MCF 10A (cell line): ENCODE measurements at regions of chr3 and their contacts with region 1.

Region 1: DNA sequence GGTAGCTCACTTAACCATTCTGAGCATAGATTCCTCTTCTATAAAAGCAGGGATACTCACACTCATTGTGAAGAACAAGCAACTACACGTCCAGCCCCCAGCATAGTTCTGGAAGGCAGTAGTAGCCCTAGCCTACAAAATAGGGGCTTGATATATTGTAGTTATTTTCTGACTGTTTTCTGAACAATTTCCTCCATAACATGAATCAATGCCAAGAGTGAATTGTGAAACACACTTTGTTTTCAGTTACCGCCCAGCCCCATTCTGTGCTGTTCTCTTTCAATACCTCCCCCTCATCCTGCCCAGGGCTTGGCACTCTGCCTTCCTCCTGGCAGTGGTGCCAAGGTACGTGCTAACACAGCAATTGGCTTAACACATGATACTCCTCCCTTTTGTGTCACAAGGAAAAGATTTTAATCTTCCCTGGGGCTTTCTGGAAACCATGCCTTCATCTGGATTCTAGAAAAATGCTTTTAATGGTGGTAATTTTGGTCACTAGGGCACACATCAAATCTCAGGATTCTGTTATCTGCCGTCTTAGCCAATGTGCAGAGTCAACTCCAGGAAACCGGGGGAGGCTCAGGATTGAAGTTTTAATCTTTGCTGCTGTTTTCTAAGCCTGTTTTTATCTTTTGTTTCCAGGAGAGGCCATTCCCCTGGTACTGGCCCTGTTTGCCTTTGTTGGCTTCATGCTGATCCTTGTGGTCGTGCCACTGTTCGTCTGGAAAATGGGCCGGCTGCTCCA is 37.2 kb downstream of the IL20RB start:
- DNase-seq: peak; percentile 99
- H3K4me3 Mint-ChIP-seq: peak overlapping the region; percentile 42
- H3K27ac Mint-ChIP-seq: peak overlapping the region; percentile 94
- H3K4me1 Mint-ChIP-seq: peaks cover 61% of the 10 kb centered on the region
- H3K27me3 Mint-ChIP-seq: no peaks in the 10 kb centered on the region
- CTCF ChIP-seq: no peak

Region 2: DNA sequence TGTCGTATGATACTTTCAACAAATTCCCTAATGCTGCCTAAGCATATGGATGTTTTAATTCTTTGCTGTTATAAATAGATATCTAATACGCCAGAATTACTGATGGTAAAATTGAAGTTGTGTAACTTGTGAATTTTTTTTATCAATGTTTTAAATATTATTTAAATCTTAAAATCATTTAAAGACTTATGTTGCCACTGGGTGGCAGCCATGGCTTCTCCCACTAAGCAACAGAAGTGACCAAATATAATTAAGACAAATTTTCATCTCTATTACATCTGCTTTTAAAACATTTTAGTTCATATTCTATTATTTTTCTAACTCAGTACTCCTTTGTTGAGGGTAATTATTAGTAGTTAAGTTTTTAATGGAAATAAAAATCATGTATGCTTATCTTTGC is 45.2 kb before region 1 on chr3:
- CTCF ChIA-PET with region 1: interaction called, 6 read pairs
- POLR2A ChIA-PET with region 1: interaction called, 452 read pairs
- intact Hi-C with region 1: no loop called
- DNase-seq: no peak
- H3K4me3 Mint-ChIP-seq: no peak overlapping the region
- H3K27ac Mint-ChIP-seq: no peak overlapping the region
- H3K4me1 Mint-ChIP-seq: peaks cover 42% of the 10 kb centered on the region
- H3K27me3 Mint-ChIP-seq: no peaks in the 10 kb centered on the region
- CTCF ChIP-seq: peak; percentile 12

Region 3: GRCh38 chr3:137554242-137554641 is 559.3 kb after region 1 on chr3:
- CTCF ChIA-PET with region 1: no interaction called
- POLR2A ChIA-PET with region 1: no interaction called
- intact Hi-C with region 1: no loop called
- DNase-seq: no peak
- H3K4me3 Mint-ChIP-seq: no peak overlapping the region
- H3K27ac Mint-ChIP-seq: no peak overlapping the region
- H3K4me1 Mint-ChIP-seq: no peaks in the 10 kb centered on the region
- H3K27me3 Mint-ChIP-seq: peaks cover 40% of the 10 kb centered on the region
- CTCF ChIP-seq: no peak